Activated CD4-positive, alpha-beta T cell treated with anti-CD3 and anti-CD28 coated beads for 36 hours (primary cell): ENCODE measurements at regions of chr9 and their contacts with region 1.

Region 1: GRCh38 chr9:28190981-28191380 is 617.7 kb upstream of the C9orf72 start:
- DNase-seq: no peak
- ATAC-seq: no peak
- H3K4me3 Mint-ChIP-seq: no peak overlapping the region
- H3K27ac Mint-ChIP-seq: no peak overlapping the region
- H3K4me1 Mint-ChIP-seq: no peaks in the 10 kb centered on the region
- H3K27me3 Mint-ChIP-seq: no peaks in the 10 kb centered on the region

Region 2: DNA sequence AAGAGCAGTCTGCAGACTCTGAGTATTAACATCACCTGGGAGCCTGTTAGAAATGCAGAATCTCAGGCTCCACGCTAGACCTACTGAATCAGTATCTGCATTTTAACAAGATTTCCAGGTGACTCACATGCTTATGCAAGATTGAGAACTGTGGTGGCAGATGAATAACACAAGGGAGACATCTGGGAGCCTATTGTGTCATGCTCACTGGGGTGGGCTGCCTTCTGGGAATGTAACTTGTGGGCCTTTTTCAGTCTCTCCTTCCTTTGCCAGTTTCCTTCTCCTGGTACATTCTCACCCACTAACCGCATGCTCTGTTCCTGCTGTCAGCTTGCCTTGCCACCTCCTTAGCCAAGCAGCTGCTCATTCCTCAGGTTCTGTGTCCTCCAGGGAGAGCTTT is 441.1 kb before region 1 on chr9:
- CTCF ChIA-PET with region 1: no interaction called
- POLR2A ChIA-PET with region 1: no interaction called
- intact Hi-C with region 1: no loop called
- DNase-seq: no peak
- ATAC-seq: peak; percentile 36
- H3K4me3 Mint-ChIP-seq: no peak overlapping the region
- H3K27ac Mint-ChIP-seq: no peak overlapping the region
- H3K4me1 Mint-ChIP-seq: no peaks in the 10 kb centered on the region
- H3K27me3 Mint-ChIP-seq: peaks cover 7% of the 10 kb centered on the region

Region 3: GRCh38 chr9:27771803-27772545 is 419.0 kb before region 1 on chr9:
- CTCF ChIA-PET with region 1: no interaction called
- POLR2A ChIA-PET with region 1: no interaction called
- intact Hi-C with region 1: no loop called
- DNase-seq: no peak
- ATAC-seq: no peak
- H3K4me3 Mint-ChIP-seq: no peak overlapping the region
- H3K27ac Mint-ChIP-seq: no peak overlapping the region
- H3K4me1 Mint-ChIP-seq: no peaks in the 10 kb centered on the region
- H3K27me3 Mint-ChIP-seq: no peaks in the 10 kb centered on the region

Region 4: DNA sequence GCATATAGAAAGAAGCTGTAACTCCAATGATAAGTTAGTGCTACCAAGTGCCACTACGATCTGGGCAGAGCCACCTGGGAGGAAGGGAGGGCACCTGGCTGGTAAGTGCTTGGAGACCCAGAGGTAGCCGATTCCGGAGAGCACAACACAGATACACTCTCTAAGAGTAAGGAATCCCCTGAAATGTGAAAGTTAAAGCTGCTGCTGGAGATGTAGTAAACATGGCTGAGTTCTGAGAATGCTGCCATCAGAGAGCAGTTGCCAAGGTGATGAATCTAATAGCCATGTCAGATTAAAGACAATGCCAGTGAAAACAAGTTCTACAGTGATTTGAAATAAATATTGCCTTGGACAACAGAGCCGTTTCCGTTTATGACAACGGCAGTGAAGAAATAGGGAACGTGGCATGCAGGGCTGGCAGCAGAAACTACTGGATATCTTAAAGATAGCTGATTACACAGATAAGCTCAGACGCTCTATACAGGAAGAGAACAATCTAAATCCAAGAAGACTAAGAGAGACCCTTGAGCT is 56.5 kb before region 1 on chr9:
- CTCF ChIA-PET with region 1: no interaction called
- POLR2A ChIA-PET with region 1: no interaction called
- intact Hi-C with region 1: no loop called
- DNase-seq: no peak
- ATAC-seq: no peak
- H3K4me3 Mint-ChIP-seq: no peak overlapping the region
- H3K27ac Mint-ChIP-seq: no peak overlapping the region
- H3K4me1 Mint-ChIP-seq: no peaks in the 10 kb centered on the region
- H3K27me3 Mint-ChIP-seq: no peaks in the 10 kb centered on the region

Region 5: DNA sequence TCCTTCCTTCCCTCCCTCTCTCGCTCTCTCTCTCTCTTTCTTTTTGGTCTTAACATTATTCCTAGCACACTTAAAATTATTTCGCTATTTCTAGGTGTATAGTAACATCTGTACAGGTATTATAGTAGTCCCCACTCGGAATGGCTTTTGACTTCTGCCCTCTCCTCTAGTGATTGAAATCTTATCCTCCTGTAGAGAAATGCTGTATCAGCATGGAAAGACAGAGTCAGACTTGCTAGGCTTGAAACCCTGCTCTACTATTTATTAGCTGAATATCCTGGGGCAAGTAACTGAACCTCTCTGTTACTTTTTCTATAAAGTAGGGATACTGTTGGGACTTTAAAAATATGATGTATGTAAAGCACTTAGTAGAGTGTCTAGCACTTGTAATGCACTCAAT is 64.2 kb after region 1 on chr9:
- CTCF ChIA-PET with region 1: no interaction called
- POLR2A ChIA-PET with region 1: no interaction called
- intact Hi-C with region 1: loop called in 1 of 2 experiments (anchors 10 kb)
- DNase-seq: no peak
- ATAC-seq: no peak
- H3K4me3 Mint-ChIP-seq: no peak overlapping the region
- H3K27ac Mint-ChIP-seq: no peak overlapping the region
- H3K4me1 Mint-ChIP-seq: no peaks in the 10 kb centered on the region
- H3K27me3 Mint-ChIP-seq: no peaks in the 10 kb centered on the region

Region 6: DNA sequence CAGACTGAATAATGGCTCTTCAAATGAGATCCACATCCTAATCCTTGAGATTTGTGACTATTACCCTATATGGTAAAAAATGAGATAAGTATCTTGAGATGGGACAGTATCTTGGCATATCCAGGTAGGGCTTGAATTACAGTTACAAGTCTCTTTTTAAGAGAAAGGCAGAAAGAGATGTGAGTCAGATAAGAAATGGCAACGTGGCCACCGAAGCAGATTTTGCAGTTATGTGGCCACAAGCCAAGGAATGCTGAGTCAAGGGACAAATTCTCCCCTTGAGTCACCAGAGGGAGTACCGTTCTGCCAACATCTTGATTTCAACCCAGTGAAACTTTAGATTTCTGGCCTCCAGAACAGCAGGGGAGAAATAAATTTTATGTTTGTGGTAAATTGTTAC is 1365.3 kb after region 1 on chr9:
- CTCF ChIA-PET with region 1: no interaction called
- POLR2A ChIA-PET with region 1: no interaction called
- intact Hi-C with region 1: no loop called
- DNase-seq: no peak
- ATAC-seq: no peak
- H3K4me3 Mint-ChIP-seq: no peak overlapping the region
- H3K27ac Mint-ChIP-seq: no peak overlapping the region
- H3K4me1 Mint-ChIP-seq: no peaks in the 10 kb centered on the region
- H3K27me3 Mint-ChIP-seq: no peaks in the 10 kb centered on the region